Right lobe of liver (tissue), 6 donors: ENCODE measurements at regions of chr2 and their contacts with region 1.

Region 1: GRCh38 chr2:27723372-27724144 is 48.0 kb upstream of the MRPL33 start:
- DNase-seq: peak; percentile 67 to 77 (median 74)
- ATAC-seq: peak; percentile 82 to 97 (median 94)
- H3K4me3 ChIP-seq: no peak overlapping the region
- H3K27ac ChIP-seq: no peak overlapping the region
- H3K4me1 ChIP-seq: peaks cover 0 to 4% (median 0%) of the 10 kb centered on the region in 4 donors
- H3K27me3 ChIP-seq: no peaks in the 10 kb centered on the region
- CTCF ChIP-seq: peak; percentile 78 to 86 (median 84)
- POLR2A ChIP-seq: no peak

Region 2: DNA sequence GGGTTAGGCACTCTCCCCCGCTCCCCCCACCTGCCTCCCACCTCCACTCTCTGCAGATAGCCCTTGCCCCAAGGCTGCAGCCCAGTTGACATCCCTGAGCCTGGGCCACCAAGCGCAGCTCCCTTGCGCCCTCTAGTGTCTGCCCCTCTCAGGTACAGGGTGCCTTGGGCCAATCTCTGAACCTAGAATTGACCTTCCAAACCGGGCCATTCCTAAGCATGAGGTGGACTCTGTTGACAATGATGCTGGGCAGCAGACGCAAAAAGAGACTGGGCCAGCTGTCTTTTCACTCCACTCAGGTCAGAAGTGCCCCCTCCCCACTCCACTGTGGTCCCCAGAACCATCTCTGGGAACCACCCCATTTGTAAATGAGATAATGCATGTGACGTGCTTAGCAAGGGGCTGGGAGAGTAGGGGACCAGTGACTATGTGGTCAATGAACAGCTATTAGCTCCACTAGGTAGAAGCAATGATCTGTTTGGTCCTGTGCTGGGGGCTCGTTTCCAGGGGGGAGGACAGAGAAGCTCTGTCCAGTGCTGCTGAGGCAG is 729.0 kb after region 1 on chr2:
- intact Hi-C with region 1: loop called in 1 of 2 experiments (anchors 10 kb)
- DNase-seq: peak; percentile 80 to 83 (median 83)
- ATAC-seq: peak; percentile 89 to 95 (median 90)
- H3K4me3 ChIP-seq: no peak overlapping the region
- H3K27ac ChIP-seq: no peak overlapping the region
- H3K4me1 ChIP-seq: no peaks in the 10 kb centered on the region
- H3K27me3 ChIP-seq: no peaks in the 10 kb centered on the region
- CTCF ChIP-seq: peak; percentile 86 to 94 (median 93)
- POLR2A ChIP-seq: no peak